OCI-LY7 (cell line): ENCODE measurements at regions of chr16 and their contacts with region 1.

Region 1: DNA sequence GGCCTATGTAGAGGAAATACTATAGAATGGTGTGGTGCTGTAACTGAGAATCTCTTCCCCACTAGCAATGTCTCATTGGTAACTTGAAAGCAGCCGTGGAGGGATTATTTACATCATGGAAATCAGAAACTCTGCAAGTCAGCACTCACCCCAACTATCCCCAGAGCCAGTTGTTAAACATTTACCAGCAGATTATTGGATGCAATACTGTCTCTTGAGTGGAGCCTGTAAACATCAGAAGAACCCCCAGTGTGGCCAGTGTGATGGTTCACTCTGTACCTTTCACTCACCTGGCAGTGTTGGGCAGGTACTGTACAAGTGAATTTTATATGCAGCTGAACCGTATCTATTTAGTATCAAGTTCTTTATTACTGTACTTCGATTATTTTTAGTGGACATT is 299.8 kb upstream of the SALL1 start:
- DNase-seq: no peak
- H3K4me3 ChIP-seq: no peak overlapping the region
- H3K27ac ChIP-seq: no peak overlapping the region
- H3K4me1 ChIP-seq: no peaks in the 10 kb centered on the region
- CTCF ChIP-seq: no peak

Region 2: GRCh38 chr16:51374346-51374745 is 76.6 kb before region 1 on chr16:
- CTCF ChIA-PET with region 1: no interaction called
- POLR2A ChIA-PET with region 1: no interaction called
- intact Hi-C with region 1: no loop called
- DNase-seq: no peak
- H3K4me3 ChIP-seq: no peak overlapping the region
- H3K27ac ChIP-seq: no peak overlapping the region
- H3K4me1 ChIP-seq: no peaks in the 10 kb centered on the region
- CTCF ChIP-seq: no peak

Region 3: DNA sequence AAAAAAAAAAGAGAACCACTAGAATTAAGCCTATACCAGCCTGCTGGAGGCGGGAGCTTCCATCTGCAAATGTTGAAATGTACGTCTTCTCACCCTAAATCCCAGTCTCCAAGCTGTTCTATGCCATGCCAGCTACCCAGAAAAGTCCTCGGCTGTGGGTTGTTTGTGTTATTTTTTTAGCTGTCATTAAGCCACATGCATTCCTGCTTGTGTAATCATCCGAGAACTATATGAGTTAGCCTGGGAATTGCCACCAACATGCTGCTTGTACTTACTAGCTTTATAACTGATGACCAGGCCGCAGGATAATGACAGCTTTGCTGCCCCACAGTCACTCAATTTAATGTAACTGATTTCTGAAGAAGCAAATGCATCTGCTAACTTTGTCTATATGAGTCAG is 14.1 kb after region 1 on chr16:
- CTCF ChIA-PET with region 1: no interaction called
- POLR2A ChIA-PET with region 1: interaction called, 10 read pairs
- intact Hi-C with region 1: no loop called
- DNase-seq: no peak
- H3K4me3 ChIP-seq: no peak overlapping the region
- H3K27ac ChIP-seq: no peak overlapping the region
- H3K4me1 ChIP-seq: no peaks in the 10 kb centered on the region
- CTCF ChIP-seq: no peak